ENCODE measurements at regions of chr12 and their contacts with region 1.

Region 1: GRCh38 chr12:76020731-76021672 is 10.6 kb downstream of the PHLDA1 start:
- DNase-seq: no peak
- ATAC-seq: peak in 2 of 4 donors; percentile 14 to 73
- H3K4me3 ChIP-seq: no peak overlapping the region
- H3K27ac ChIP-seq: peak overlapping the region in 8 of 12 donors; percentile 19 to 80 (median 42)
- H3K4me1 ChIP-seq: peaks cover 0 to 27% (median 2%) of the 10 kb centered on the region in 12 donors
- H3K27me3 ChIP-seq: no peaks in the 10 kb centered on the region
- CTCF ChIP-seq: no peak
- POLR2A ChIP-seq: no peak

Region 2: GRCh38 chr12:75944097-75944904 is 76.7 kb before region 1 on chr12:
- intact Hi-C with region 1: loop called in 3 of 10 experiments (anchors 5 to 10 kb)
- DNase-seq: no peak
- ATAC-seq: peak; percentile 60 to 91 (median 84)
- H3K4me3 ChIP-seq: peak overlapping the region in 1 of 12 donors; percentile 1
- H3K27ac ChIP-seq: peak overlapping the region in 8 of 12 donors; percentile 28 to 86 (median 57)
- H3K4me1 ChIP-seq: peaks cover 0 to 19% (median 11%) of the 10 kb centered on the region in 12 donors
- H3K27me3 ChIP-seq: no peaks in the 10 kb centered on the region
- CTCF ChIP-seq: no peak
- POLR2A ChIP-seq: no peak

Measured in heart left ventricle (tissue), 16 donors.